SK-N-SH (cell line): ENCODE measurements at regions of chr2 and their contacts with region 1.

Region 1: GRCh38 chr2:231713730-231714430 is 5.6 kb downstream of the PTMA start:
- DNase-seq: peak; percentile 88
- H3K4me3 ChIP-seq: no peak overlapping the region
- H3K27ac ChIP-seq: peak overlapping the region; percentile 50 to 56
- H3K4me1 ChIP-seq: peaks cover 20 to 32% of the 10 kb centered on the region in 2 experiments; a peak in 3 of 4 replicates
- H3K27me3 ChIP-seq: no peaks in the 10 kb centered on the region
- CTCF ChIP-seq: peak; percentile 95
- EP300 ChIP-seq: no peak; a peak in 1 of 4 replicates
- RAD21 ChIP-seq: peak; percentile 61

Region 2: DNA sequence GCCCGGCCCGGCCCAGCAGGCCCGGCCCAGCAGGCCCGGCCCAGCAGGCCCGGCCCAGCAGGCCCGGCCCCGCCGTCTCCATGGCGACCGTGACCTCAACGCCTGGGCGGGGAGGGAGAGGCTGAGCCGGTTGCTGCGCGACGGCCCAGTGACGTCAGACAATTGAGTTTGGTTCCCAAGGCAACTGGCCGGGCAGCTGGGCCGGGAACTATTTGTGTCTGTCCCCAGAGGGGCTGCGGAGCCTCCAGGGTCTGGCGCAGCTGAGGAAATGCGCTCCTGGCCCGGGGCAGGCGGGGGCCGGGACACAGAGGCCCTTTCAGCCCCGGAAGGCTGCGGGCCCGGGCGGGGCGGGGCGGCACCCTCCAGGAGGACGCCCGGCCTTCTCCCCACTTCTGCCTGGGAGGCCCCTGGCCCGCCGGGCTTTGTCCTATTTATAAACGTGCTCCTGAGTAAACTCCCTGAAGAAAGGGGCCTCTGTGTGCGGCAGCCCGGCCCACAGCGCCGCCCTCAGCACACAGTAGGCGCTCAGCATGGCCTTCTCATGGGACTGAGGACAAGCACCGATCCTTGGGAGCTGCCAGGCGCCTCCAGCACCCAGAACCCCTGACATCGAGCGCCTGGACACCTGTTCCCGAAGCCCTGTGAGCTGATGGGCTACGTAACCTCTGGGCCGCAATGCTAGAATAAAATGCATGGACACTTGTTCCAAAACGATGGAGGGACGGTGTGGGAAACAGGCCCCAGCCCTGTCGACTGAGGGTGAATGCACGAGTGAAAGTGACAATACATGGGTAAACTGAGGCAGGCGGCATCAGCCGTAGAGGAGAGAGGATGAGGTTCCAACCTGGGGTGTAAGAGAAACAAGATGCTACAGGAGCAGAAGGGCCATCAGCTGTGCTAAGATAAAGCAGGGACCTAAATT is 108.9 kb before region 1 on chr2:
- CTCF ChIA-PET with region 1: interaction called, 109 read pairs
- POLR2A ChIA-PET with region 1: interaction called, 5 read pairs
- DNase-seq: peak; percentile 99
- H3K4me3 ChIP-seq: peak overlapping the region; percentile 51 to 66
- H3K27ac ChIP-seq: peak overlapping the region; percentile 96
- H3K4me1 ChIP-seq: peaks cover 10 to 28% of the 10 kb centered on the region in 2 experiments
- H3K27me3 ChIP-seq: no peaks in the 10 kb centered on the region
- CTCF ChIP-seq: no peak
- EP300 ChIP-seq: peak in 1 of 2 experiments; percentile 19; a peak in 1 of 4 replicates
- RAD21 ChIP-seq: no peak

Region 3: DNA sequence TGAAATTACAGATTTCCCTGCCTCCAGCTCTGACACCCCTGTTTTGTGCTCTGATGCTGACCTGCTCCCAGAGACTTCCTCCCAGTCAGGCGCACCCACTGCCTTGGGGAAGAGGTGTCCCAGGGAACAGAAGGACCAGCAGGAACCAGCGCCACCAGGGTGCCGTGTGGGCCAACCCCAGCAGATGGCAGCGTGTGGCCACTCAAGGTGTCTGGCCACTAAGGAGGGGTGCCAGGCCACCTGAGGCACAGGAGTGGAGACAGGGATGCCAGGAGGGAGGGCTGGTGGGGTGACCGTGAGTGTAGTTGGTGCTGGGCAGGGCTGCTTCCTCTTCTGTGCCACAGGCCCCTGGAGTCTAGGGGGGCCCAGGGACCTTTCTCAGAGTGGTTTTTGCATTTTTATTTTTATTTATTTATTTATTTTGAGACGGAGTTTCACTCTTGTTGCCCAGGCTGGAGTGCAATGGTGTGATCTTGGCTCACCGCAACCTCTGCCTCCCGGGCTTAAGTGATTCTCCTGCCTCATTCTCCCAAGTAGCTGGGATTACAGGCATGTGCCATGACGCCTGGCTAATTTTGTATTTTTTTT is 65.2 kb before region 1 on chr2:
- CTCF ChIA-PET with region 1: interaction called, 47 read pairs
- POLR2A ChIA-PET with region 1: no interaction called
- DNase-seq: peak; percentile 85
- H3K4me3 ChIP-seq: no peak overlapping the region
- H3K27ac ChIP-seq: no peak overlapping the region
- H3K4me1 ChIP-seq: peaks cover 0 to 2% of the 10 kb centered on the region in 2 experiments; a peak in 1 of 4 replicates
- H3K27me3 ChIP-seq: no peaks in the 10 kb centered on the region
- CTCF ChIP-seq: peak; percentile 60
- EP300 ChIP-seq: no peak
- RAD21 ChIP-seq: peak; percentile 84

Region 4: DNA sequence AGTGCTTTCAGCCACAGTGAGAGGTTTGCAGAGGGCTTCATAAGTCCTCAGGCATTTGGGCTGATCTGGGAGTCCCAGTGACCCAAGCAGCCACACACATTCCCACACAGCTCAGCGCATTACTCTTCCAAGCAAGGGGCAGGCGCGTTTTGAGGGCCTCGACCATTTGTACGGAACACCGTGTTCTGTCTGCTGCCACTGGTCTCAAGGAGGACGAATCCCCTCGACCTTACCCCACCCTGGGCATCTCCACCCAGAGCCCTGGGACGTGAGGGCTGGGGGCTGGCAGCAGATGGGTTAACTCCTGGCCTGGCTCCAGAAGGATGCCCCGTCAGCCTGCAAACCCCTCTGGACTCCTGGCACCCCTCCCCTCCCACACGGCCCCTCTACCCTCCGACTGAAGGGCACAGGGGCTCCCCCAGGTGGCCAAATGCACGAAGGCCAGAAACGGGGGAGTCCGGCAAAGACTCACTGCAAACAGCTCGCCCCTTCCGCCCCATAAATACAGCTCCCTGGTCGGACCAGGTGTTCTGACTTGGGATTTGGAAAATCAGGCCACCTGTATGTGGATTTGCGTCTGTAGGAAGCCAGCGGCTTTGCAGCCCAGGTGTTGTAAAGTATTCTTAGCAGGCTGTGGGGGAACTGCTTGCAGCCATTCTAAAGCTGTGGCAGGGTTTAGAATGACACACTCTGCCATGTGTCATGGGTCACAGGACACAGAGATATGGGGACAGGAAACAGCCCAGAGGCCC is 39.1 kb before region 1 on chr2:
- CTCF ChIA-PET with region 1: interaction called, 1,218 read pairs
- POLR2A ChIA-PET with region 1: interaction called, 20 read pairs
- DNase-seq: peak; percentile 90
- H3K4me3 ChIP-seq: no peak overlapping the region
- H3K27ac ChIP-seq: no peak overlapping the region
- H3K4me1 ChIP-seq: peaks cover 0 to 12% of the 10 kb centered on the region in 2 experiments; a peak in 1 of 4 replicates
- H3K27me3 ChIP-seq: no peaks in the 10 kb centered on the region
- CTCF ChIP-seq: peak; percentile 84
- EP300 ChIP-seq: no peak
- RAD21 ChIP-seq: peak; percentile 73

Region 5: GRCh38 chr2:231726228-231726627 is 12.3 kb after region 1 on chr2:
- CTCF ChIA-PET with region 1: interaction called, 56 read pairs
- POLR2A ChIA-PET with region 1: interaction called, 3 read pairs
- DNase-seq: no peak
- H3K4me3 ChIP-seq: no peak overlapping the region
- H3K27ac ChIP-seq: no peak overlapping the region
- H3K4me1 ChIP-seq: no peaks in the 10 kb centered on the region; a peak in 1 of 4 replicates
- H3K27me3 ChIP-seq: no peaks in the 10 kb centered on the region
- CTCF ChIP-seq: no peak
- EP300 ChIP-seq: no peak
- RAD21 ChIP-seq: no peak

Region 6: GRCh38 chr2:231786177-231786916 is 72.5 kb after region 1 on chr2 and contains the start of gene COPS7B:
- CTCF ChIA-PET with region 1: interaction called, 11 read pairs
- POLR2A ChIA-PET with region 1: no interaction called
- DNase-seq: peak; percentile 92
- H3K4me3 ChIP-seq: peak within 1 kb of the TSS; percentile 89 to 90
- H3K27ac ChIP-seq: peak within 1 kb of the TSS in 1 of 2 experiments; percentile 72; a peak in 3 of 4 replicates
- H3K4me1 ChIP-seq: peaks cover 16 to 23% of the 10 kb centered on the region in 2 experiments; a peak in 3 of 4 replicates
- H3K27me3 ChIP-seq: no peaks in the 10 kb centered on the region
- CTCF ChIP-seq: peak; percentile 66
- EP300 ChIP-seq: peak in 1 of 2 experiments; percentile 21; a peak in 1 of 4 replicates
- RAD21 ChIP-seq: no peak; the same call in 1 of the 2 replicates
- polyA plus RNA-seq, gene COPS7B: 60.5 and 92.7 TPM in 2 replicates